Activated CD4-positive, alpha-beta T cell treated with anti-CD3 and anti-CD28 coated beads for 36 hours (primary cell): ENCODE measurements at regions of chr10 and their contacts with region 1.

Region 1: GRCh38 chr10:101050208-101051069 is 11.3 kb upstream of the KAZALD1 start:
- DNase-seq: peak; percentile 88
- ATAC-seq: peak; percentile 92
- H3K4me3 Mint-ChIP-seq: no peak overlapping the region
- H3K27ac Mint-ChIP-seq: no peak overlapping the region
- H3K4me1 Mint-ChIP-seq: peaks cover 10% of the 10 kb centered on the region
- H3K27me3 Mint-ChIP-seq: peaks cover 43% of the 10 kb centered on the region

Region 2: DNA sequence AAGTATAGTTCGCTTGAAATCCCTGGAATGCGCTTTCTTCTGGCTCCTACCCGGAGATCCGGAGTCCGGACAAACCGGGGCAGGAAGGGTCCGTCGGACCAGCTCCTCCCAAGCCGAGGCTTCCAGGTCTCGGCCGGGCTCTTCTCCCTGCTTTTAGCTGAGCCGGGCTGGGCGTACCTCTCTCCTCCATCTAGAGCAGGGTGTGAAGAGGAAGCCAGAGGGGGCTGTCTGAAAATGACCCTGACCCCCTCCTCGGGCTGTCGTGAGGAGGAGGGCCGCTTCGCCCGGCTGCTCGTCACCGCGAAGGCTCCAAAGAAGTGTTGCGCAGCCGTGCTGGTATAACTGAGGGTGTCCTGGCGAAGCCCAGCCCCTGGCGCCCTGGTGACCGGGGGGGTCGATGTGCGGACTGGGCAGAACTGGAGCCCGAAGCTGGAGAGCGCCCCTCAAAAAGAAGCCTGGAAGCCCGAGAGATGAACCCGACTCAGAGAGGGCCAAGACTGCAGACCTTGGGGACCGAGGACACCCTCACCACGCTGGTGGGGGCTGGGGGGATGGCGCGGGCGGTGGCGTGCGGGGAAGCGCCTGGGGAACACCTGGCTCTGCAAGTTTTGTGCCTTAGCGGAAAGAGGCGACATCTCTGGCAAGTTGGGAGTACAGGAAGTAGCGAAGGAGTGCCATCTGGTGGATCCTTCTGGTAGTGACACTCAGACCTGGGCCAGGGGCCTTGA is 17.1 kb after region 1 on chr10:
- CTCF ChIA-PET with region 1: interaction called, 526 read pairs
- POLR2A ChIA-PET with region 1: interaction called, 3 read pairs
- intact Hi-C with region 1: loop called in 1 of 2 experiments (anchors 1 kb)
- DNase-seq: peak; percentile 87
- ATAC-seq: peak; percentile 74
- H3K4me3 Mint-ChIP-seq: peak overlapping the region; percentile 72
- H3K27ac Mint-ChIP-seq: peak overlapping the region; percentile 25
- H3K4me1 Mint-ChIP-seq: peaks cover 28% of the 10 kb centered on the region
- H3K27me3 Mint-ChIP-seq: peaks cover 30% of the 10 kb centered on the region